T-cell (primary cell): ENCODE measurements at regions of chr20 and their contacts with region 1.

Region 1: DNA sequence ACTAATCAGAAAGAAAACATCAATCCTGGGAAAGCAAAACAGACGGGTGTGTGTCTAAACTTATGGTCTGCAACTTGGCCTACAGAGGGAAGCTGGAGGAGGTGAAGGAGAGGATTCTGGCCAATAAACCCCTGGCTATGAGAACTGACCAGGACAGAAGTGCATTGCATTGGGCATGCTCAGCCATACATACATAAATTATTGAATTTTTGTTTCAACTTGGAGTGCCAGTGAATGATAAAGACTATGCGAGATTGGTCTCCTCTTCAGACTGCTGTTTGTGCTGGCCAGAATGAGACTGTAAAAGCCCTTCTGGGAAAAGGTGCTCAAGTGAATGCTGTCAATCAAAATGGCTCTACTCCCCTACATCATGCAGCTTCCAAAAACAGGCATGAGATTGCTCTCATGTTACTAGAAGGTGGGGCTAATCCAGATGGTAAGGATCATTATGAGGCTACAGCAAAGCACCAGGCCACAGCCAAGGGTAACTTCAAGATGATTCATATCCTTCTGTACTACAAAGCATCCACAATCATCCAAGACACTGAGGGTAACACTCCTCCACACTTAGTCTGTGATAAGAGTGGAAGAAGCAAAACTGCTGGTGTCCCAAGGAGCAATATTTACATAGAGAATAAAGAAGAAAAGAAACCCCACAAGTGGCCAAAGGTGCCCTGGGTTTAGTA is 17.4 kb downstream of the ADNP start:
- DNase-seq: no peak
- ATAC-seq: peak; percentile 37 to 71 (median 65)
- H3K4me3 ChIP-seq: no peak overlapping the region
- H3K4me3 Mint-ChIP-seq: no peak overlapping the region
- H3K27ac ChIP-seq: no peak overlapping the region
- H3K27ac Mint-ChIP-seq: peak overlapping the region; percentile 5 to 51
- H3K4me1 ChIP-seq: peaks cover 25 to 27% of the 10 kb centered on the region in 2 experiments
- H3K4me1 Mint-ChIP-seq: peaks cover 83 to 88% (median 84%) of the 10 kb centered on the region in 3 donors
- H3K27me3 ChIP-seq: no peaks in the 10 kb centered on the region
- H3K27me3 Mint-ChIP-seq: no peaks in the 10 kb centered on the region

Region 2: DNA sequence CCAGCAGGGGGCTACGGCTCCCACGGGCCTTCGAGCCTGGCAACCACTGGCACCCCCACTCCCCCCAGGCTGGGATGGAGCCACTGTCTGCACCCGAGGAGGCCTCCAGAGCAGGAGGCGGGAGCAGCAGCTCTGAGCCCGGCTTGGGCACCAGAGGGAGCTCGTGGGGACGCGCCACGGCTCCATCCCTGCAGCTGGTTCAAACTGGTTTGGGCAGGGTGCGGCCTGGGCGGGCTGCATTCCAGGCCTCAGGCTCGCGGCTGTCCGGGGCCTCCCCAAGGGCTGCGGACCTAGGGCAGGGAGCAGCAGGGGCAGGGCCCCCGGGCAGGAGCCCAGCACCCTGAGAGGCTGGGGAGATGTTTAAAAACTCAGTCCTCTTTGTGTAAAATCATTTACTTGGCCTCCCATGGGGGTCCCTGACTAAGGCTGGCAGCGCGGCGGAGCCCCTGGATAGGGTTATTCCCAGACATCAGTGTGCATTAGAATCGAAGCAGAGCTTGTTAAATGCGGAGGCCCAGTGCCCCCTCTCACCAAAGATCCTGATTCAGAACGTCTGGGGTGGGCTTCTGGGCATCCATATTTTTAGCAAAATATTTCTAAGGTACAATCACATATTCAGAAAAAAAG is 123.1 kb before region 1 on chr20:
- CTCF ChIA-PET with region 1: interaction called, 6 to 12 read pairs
- POLR2A ChIA-PET with region 1: interaction called in 1 of 2 experiments, 3 read pairs
- DNase-seq: peak; percentile 43 to 84 (median 67)
- ATAC-seq: peak; percentile 59 to 69 (median 62)
- H3K4me3 ChIP-seq: peak overlapping the region in 1 of 2 donors; percentile 35
- H3K4me3 Mint-ChIP-seq: peak overlapping the region in 1 of 3 donors; percentile 30
- H3K27ac ChIP-seq: peak overlapping the region; percentile 93
- H3K27ac Mint-ChIP-seq: peak overlapping the region; percentile 86 to 91
- H3K4me1 ChIP-seq: peaks cover 2 to 21% of the 10 kb centered on the region in 2 experiments
- H3K4me1 Mint-ChIP-seq: peaks cover 8 to 15% (median 11%) of the 10 kb centered on the region in 3 donors
- H3K27me3 ChIP-seq: peaks cover 0 to under 1% of the 10 kb centered on the region in 2 experiments
- H3K27me3 Mint-ChIP-seq: no peaks in the 10 kb centered on the region

Region 3: DNA sequence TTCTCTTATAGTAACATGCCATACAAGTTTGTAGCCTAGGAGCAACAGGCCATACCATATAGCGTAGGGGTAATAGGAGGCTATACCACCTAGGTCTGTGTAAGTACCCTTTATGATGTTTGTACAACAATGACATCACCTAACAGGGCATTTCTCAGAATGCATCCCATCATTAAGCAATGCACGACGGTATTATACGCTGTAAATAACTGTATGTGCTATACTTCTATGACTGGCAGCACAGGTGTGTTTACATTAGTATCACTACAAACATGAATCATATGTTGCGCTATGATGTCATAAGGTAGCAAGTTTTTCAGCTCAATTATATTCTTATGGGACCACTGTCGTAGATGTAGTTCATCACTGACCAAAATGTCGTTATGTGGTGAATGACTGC is 13.6 kb before region 1 on chr20:
- CTCF ChIA-PET with region 1: interaction called, 3 to 5 read pairs
- POLR2A ChIA-PET with region 1: interaction called in 1 of 2 experiments, 12 read pairs
- DNase-seq: no peak
- ATAC-seq: no peak
- H3K4me3 ChIP-seq: no peak overlapping the region
- H3K4me3 Mint-ChIP-seq: no peak overlapping the region
- H3K27ac ChIP-seq: no peak overlapping the region
- H3K27ac Mint-ChIP-seq: no peak overlapping the region
- H3K4me1 ChIP-seq: no peaks in the 10 kb centered on the region
- H3K4me1 Mint-ChIP-seq: peaks cover 25 to 42% (median 40%) of the 10 kb centered on the region in 3 donors
- H3K27me3 ChIP-seq: no peaks in the 10 kb centered on the region
- H3K27me3 Mint-ChIP-seq: no peaks in the 10 kb centered on the region

Region 4: GRCh38 chr20:51860111-51860882 is 946.5 kb after region 1 on chr20:
- CTCF ChIA-PET with region 1: no interaction called
- POLR2A ChIA-PET with region 1: no interaction called
- DNase-seq: no peak
- ATAC-seq: no peak
- H3K4me3 ChIP-seq: no peak overlapping the region
- H3K4me3 Mint-ChIP-seq: no peak overlapping the region
- H3K27ac ChIP-seq: no peak overlapping the region
- H3K27ac Mint-ChIP-seq: no peak overlapping the region
- H3K4me1 ChIP-seq: no peaks in the 10 kb centered on the region
- H3K4me1 Mint-ChIP-seq: no peaks in the 10 kb centered on the region
- H3K27me3 ChIP-seq: peaks cover 0 to 17% of the 10 kb centered on the region in 2 experiments
- H3K27me3 Mint-ChIP-seq: peaks cover 11 to 31% of the 10 kb centered on the region in 2 donors